ENCODE measurements at regions of chr13 and their contacts with region 1.

Region 1: DNA sequence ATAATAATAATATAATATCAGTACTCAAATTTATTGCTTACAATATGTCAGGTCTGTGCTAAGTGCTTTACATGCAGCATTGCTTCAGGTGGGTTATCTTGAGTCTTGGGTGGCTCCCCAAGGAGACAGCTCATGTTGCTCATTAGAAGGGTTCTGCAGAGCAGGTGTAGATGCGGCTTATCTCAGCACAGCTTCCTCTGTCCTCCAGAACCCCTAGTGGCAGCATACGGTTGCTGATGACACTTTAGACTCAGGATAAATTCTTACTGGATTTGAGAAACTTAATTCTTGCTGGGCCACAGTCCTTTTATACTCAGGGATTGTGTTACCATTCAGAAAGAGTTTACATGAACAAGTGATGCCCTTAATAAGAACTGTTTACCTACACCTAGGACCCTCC is 8.9 kb downstream of the COG3 start:
- DNase-seq: peak; percentile 42 to 49
- H3K4me3 ChIP-seq: no peak overlapping the region
- H3K4me3 Mint-ChIP-seq: no peak overlapping the region
- H3K27ac Mint-ChIP-seq: no peak overlapping the region
- H3K4me1 ChIP-seq: peaks cover 6% of the 10 kb centered on the region
- H3K4me1 Mint-ChIP-seq: peaks cover 3% of the 10 kb centered on the region
- H3K27me3 ChIP-seq: no peaks in the 10 kb centered on the region
- H3K27me3 Mint-ChIP-seq: no peaks in the 10 kb centered on the region
- CTCF ChIP-seq: peak; percentile 45 to 75

Region 2: DNA sequence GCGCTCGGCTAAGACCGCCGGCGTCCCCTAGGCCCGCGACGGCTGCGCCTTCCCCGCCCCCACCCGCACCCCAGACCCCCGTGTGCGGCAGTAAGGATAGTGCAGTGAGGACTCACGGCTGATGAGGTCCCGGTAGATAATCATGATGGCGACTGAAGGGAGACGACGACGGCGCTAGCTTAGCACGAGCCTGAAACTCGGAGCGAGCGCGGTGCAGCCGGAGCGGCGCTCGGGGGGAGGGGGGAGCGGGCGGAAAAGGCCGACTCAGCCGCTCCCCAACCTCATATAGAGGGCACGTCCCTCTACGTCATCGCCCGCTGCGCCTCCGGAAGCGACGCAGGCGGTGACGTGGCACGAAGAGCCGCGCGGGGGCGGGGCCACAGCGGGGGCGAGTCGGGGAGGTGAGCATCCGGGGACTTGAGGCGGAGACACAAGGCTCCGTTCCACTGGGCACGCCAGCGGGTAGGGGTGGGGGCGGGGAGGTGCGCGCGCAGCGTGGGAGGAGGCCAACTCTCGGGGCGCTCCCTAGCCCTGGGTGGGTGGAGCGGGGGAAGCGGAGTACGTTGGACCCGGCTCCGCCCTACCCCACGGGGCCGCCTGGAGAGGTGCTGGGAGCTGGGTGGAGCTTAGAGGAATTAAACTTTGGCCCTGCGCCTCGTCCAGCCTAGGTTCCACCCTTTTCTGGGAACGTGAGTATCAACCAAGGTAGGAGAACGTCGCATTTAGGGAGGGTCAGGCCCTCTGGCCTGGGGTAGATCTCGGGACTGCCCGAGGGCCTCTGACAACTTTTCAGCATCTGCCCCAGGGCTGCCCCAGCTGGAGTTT is 132.5 kb before region 1 on chr13 and contains the start of gene TPT1:
- CTCF ChIA-PET with region 1: no interaction called
- POLR2A ChIA-PET with region 1: no interaction called
- intact Hi-C with region 1: no loop called
- DNase-seq: peak; percentile 99 to 100
- H3K4me3 ChIP-seq: peak within 1 kb of the TSS; percentile 79
- H3K4me3 Mint-ChIP-seq: peak within 1 kb of the TSS; percentile 94
- H3K27ac Mint-ChIP-seq: peak within 1 kb of the TSS; percentile 98
- H3K4me1 ChIP-seq: peaks cover 40% of the 10 kb centered on the region
- H3K4me1 Mint-ChIP-seq: peaks cover 23% of the 10 kb centered on the region
- H3K27me3 ChIP-seq: no peaks in the 10 kb centered on the region
- H3K27me3 Mint-ChIP-seq: no peaks in the 10 kb centered on the region
- CTCF ChIP-seq: no peak
- total RNA-seq, gene TPT1: 3,524 and 3,611 TPM in 2 replicates

Region 3: GRCh38 chr13:45417790-45418534 is 55.7 kb before region 1 on chr13 and contains the start of gene SLC25A30:
- CTCF ChIA-PET with region 1: interaction called, 6 read pairs
- POLR2A ChIA-PET with region 1: no interaction called
- intact Hi-C with region 1: loop called (anchors 1 kb)
- DNase-seq: peak; percentile 96 to 97
- H3K4me3 ChIP-seq: peak within 1 kb of the TSS; percentile 86
- H3K4me3 Mint-ChIP-seq: peak within 1 kb of the TSS; percentile 88
- H3K27ac Mint-ChIP-seq: peak within 1 kb of the TSS; percentile 29
- H3K4me1 ChIP-seq: peaks cover 17% of the 10 kb centered on the region
- H3K4me1 Mint-ChIP-seq: peaks cover 8% of the 10 kb centered on the region
- H3K27me3 ChIP-seq: no peaks in the 10 kb centered on the region
- H3K27me3 Mint-ChIP-seq: no peaks in the 10 kb centered on the region
- CTCF ChIP-seq: no peak
- total RNA-seq, gene SLC25A30: 12.2 and 16.5 TPM in 2 replicates